ENCODE measurements at regions of chr5 and their contacts with region 1.

Region 1: GRCh38 chr5:96439477-96440184 is 6.6 kb upstream of the PCSK1 start:
- DNase-seq: peak; percentile 56
- ATAC-seq: peak; percentile 96
- H3K4me3 ChIP-seq: peak overlapping the region; percentile 28; the same call in 1 of the 2 replicates
- H3K27ac ChIP-seq: peak overlapping the region; percentile 48
- H3K4me1 ChIP-seq: peaks cover 11% of the 10 kb centered on the region
- H3K27me3 ChIP-seq: no peaks in the 10 kb centered on the region
- CTCF ChIP-seq: peak; percentile 17 to 54 (median 33); a peak in 5 of 6 replicates
- EP300 ChIP-seq: peak in 1 of 2 experiments; percentile 52; a peak in 1 of 4 replicates
- POLR2A ChIP-seq: no peak
- RAD21 ChIP-seq: peak; percentile 49

Region 2: GRCh38 chr5:94968507-94969095 is 1471.0 kb before region 1 on chr5:
- CTCF ChIA-PET with region 1: no interaction called
- POLR2A ChIA-PET with region 1: no interaction called
- RAD21 ChIA-PET with region 1: no interaction called
- SMC1A ChIA-PET with region 1: no interaction called
- in situ Hi-C with region 1: no loop called
- intact Hi-C with region 1: no loop called
- DNase-seq: peak; percentile 26
- ATAC-seq: peak; percentile 78
- H3K4me3 ChIP-seq: no peak overlapping the region
- H3K27ac ChIP-seq: no peak overlapping the region
- H3K4me1 ChIP-seq: no peaks in the 10 kb centered on the region
- H3K27me3 ChIP-seq: no peaks in the 10 kb centered on the region
- CTCF ChIP-seq: peak; percentile 38 to 60 (median 55); a peak in 5 of 6 replicates
- EP300 ChIP-seq: no peak
- POLR2A ChIP-seq: no peak
- RAD21 ChIP-seq: peak; percentile 86

Region 3: GRCh38 chr5:96187309-96188027 is 252.2 kb before region 1 on chr5:
- CTCF ChIA-PET with region 1: no interaction called
- POLR2A ChIA-PET with region 1: no interaction called
- RAD21 ChIA-PET with region 1: no interaction called
- SMC1A ChIA-PET with region 1: no interaction called
- in situ Hi-C with region 1: no loop called
- intact Hi-C with region 1: no loop called
- DNase-seq: no peak
- ATAC-seq: no peak
- H3K4me3 ChIP-seq: no peak overlapping the region
- H3K27ac ChIP-seq: no peak overlapping the region
- H3K4me1 ChIP-seq: no peaks in the 10 kb centered on the region
- H3K27me3 ChIP-seq: no peaks in the 10 kb centered on the region
- CTCF ChIP-seq: no peak
- EP300 ChIP-seq: no peak
- POLR2A ChIP-seq: no peak
- RAD21 ChIP-seq: no peak

Region 4: DNA sequence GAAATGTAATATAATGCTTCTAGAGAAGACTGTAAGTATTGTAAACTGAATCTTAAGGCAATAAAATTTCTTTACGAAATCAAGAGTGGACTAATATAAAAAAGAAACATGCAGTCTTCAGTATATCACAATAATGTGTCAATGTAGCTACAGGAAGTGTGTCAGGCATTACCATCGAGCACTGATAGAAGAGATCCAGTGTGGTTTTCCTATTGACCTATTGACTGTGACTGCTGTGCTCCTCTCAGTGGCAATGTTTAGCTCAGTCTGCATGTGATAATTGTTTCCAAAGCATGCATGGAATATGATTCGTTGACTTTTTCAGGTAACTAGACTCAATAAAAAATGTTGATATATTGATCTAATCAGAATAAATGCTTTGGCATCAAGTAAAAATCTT is 13.8 kb after region 1 on chr5:
- CTCF ChIA-PET with region 1: interaction called, 12 read pairs
- POLR2A ChIA-PET with region 1: interaction called, 4 read pairs
- RAD21 ChIA-PET with region 1: interaction called, 9 read pairs
- SMC1A ChIA-PET with region 1: interaction called, 3 read pairs
- in situ Hi-C with region 1: no loop called
- intact Hi-C with region 1: no loop called
- DNase-seq: no peak
- ATAC-seq: no peak
- H3K4me3 ChIP-seq: no peak overlapping the region
- H3K27ac ChIP-seq: no peak overlapping the region
- H3K4me1 ChIP-seq: no peaks in the 10 kb centered on the region
- H3K27me3 ChIP-seq: no peaks in the 10 kb centered on the region; a peak in 1 of 4 replicates
- CTCF ChIP-seq: no peak
- EP300 ChIP-seq: no peak
- POLR2A ChIP-seq: no peak
- RAD21 ChIP-seq: no peak

Region 5: GRCh38 chr5:96538831-96539250 is 99.2 kb after region 1 on chr5:
- CTCF ChIA-PET with region 1: no interaction called
- POLR2A ChIA-PET with region 1: no interaction called
- RAD21 ChIA-PET with region 1: no interaction called
- SMC1A ChIA-PET with region 1: no interaction called
- in situ Hi-C with region 1: no loop called
- intact Hi-C with region 1: no loop called
- DNase-seq: no peak
- ATAC-seq: peak; percentile 66
- H3K4me3 ChIP-seq: no peak overlapping the region
- H3K27ac ChIP-seq: no peak overlapping the region
- H3K4me1 ChIP-seq: no peaks in the 10 kb centered on the region
- H3K27me3 ChIP-seq: no peaks in the 10 kb centered on the region
- CTCF ChIP-seq: no peak
- EP300 ChIP-seq: no peak
- POLR2A ChIP-seq: no peak
- RAD21 ChIP-seq: no peak

Region 6: DNA sequence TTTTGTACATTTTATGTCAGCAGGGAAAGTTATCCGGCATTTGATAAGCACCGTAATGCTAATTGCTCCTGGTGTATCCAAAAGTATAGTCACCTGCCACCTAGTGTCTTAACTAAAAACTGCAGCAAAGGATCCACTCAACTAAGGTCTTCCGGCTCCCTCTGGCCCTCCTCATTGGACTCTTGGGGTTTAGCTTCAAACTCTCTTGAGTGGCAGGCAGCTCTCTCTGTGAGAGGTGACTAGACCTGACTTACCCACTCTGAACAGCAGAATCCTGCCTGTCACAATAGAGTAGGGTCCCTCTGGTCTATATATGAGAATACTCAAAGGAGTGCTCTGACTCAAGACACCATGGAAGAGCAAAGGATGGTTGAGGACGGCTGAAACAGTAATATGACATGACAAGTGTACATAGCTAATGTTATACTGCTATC is 162.2 kb after region 1 on chr5:
- CTCF ChIA-PET with region 1: interaction called, 22 read pairs
- POLR2A ChIA-PET with region 1: no interaction called
- RAD21 ChIA-PET with region 1: interaction called, 3 read pairs
- SMC1A ChIA-PET with region 1: interaction called, 14 read pairs
- in situ Hi-C with region 1: no loop called
- intact Hi-C with region 1: loop called (anchors 5 kb)
- DNase-seq: peak; percentile 16
- ATAC-seq: peak; percentile 96
- H3K4me3 ChIP-seq: no peak overlapping the region
- H3K27ac ChIP-seq: no peak overlapping the region
- H3K4me1 ChIP-seq: no peaks in the 10 kb centered on the region
- H3K27me3 ChIP-seq: no peaks in the 10 kb centered on the region
- CTCF ChIP-seq: peak; percentile 71 to 83 (median 77)
- EP300 ChIP-seq: no peak
- POLR2A ChIP-seq: no peak
- RAD21 ChIP-seq: peak; percentile 62

Region 7: DNA sequence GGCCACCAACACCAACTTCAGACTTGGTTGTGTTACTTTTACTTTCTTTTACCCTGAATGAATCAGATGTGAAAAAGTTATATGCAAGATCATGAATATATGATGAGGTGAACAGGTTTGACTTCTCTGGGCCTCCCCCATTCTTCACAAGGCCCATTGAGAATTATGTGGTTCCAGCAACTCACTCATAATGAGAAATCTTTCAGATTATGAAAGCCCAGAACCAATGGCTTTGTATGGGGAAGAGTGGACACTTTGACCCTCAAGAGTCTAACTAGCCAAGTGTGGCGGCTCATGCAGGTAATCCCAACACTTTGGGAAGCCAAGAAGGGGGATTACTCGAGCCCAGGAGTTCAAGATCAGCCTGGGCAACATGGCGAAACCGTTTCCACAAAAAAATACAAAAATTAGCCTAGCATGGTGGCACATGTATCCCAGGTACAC is 480.1 kb after region 1 on chr5:
- CTCF ChIA-PET with region 1: no interaction called
- POLR2A ChIA-PET with region 1: no interaction called
- RAD21 ChIA-PET with region 1: no interaction called
- SMC1A ChIA-PET with region 1: no interaction called
- in situ Hi-C with region 1: no loop called
- intact Hi-C with region 1: no loop called
- DNase-seq: no peak
- ATAC-seq: peak; percentile 85
- H3K4me3 ChIP-seq: no peak overlapping the region
- H3K27ac ChIP-seq: peak overlapping the region; percentile 98
- H3K4me1 ChIP-seq: peaks cover 42% of the 10 kb centered on the region
- H3K27me3 ChIP-seq: no peaks in the 10 kb centered on the region
- CTCF ChIP-seq: no peak
- EP300 ChIP-seq: no peak; a peak in 1 of 4 replicates
- POLR2A ChIP-seq: no peak
- RAD21 ChIP-seq: 0 out of 2 replicates have a peak, but pooled peaks have one; percentile 2